T-cell (primary cell): ENCODE measurements at regions of chr7 and their contacts with region 1.

Region 1: DNA sequence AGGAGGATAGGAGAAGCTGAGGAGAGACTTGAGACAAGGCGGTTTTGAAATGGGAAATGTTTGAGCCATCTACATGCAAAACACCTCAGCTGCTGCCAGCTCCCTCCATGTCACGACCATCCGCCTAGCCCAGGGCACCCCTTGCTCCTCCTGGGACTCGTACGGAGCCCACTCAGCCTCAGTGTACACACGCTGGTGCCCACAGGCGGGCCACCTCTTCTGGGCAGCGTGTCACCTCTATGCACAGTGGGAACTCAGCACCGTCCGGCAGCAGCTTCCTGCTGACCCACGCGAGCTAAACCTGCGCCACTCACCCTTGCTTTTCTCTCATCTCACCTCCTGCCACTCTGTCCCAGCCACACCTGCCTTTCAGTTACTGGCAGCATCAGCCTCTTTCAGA is 108.3 kb downstream of the GALNT11 start:
- DNase-seq: no peak
- ATAC-seq: no peak
- H3K4me3 ChIP-seq: no peak overlapping the region
- H3K4me3 Mint-ChIP-seq: no peak overlapping the region
- H3K27ac ChIP-seq: no peak overlapping the region
- H3K27ac Mint-ChIP-seq: peak overlapping the region; percentile 43 to 66
- H3K4me1 ChIP-seq: no peaks in the 10 kb centered on the region
- H3K4me1 Mint-ChIP-seq: peaks cover 0 to 5% (median 0%) of the 10 kb centered on the region in 3 donors
- H3K27me3 ChIP-seq: no peaks in the 10 kb centered on the region
- H3K27me3 Mint-ChIP-seq: no peaks in the 10 kb centered on the region

Region 2: DNA sequence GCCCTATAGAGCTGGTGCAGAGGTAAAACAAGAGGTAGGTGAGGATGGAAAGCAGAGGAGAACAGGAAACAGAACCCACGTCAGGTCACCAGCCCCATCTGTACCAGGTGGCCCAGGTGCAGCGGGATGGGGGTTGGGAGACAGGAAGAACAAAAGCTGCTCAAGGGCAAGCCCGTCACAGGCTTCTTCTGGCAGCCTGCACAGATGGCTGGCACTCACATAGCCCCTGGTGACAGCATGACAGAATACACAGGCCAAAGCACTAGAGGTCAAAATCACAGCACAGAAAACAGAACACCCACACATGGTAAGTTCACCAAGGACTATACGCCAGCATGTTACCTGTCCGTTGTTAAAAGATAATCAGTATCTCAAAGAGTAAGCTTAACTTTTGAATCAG is 18.5 kb after region 1 on chr7:
- CTCF ChIA-PET with region 1: interaction called, 4 to 15 read pairs
- POLR2A ChIA-PET with region 1: no interaction called
- DNase-seq: no peak
- ATAC-seq: no peak
- H3K4me3 ChIP-seq: no peak overlapping the region
- H3K4me3 Mint-ChIP-seq: no peak overlapping the region
- H3K27ac ChIP-seq: no peak overlapping the region
- H3K27ac Mint-ChIP-seq: peak overlapping the region; percentile 61 to 78
- H3K4me1 ChIP-seq: no peaks in the 10 kb centered on the region
- H3K4me1 Mint-ChIP-seq: peaks cover 0 to 3% (median 2%) of the 10 kb centered on the region in 3 donors
- H3K27me3 ChIP-seq: no peaks in the 10 kb centered on the region
- H3K27me3 Mint-ChIP-seq: no peaks in the 10 kb centered on the region